CD14-positive monocyte (primary cell): ENCODE measurements at regions of chr1 and their contacts with region 1.

Region 1: DNA sequence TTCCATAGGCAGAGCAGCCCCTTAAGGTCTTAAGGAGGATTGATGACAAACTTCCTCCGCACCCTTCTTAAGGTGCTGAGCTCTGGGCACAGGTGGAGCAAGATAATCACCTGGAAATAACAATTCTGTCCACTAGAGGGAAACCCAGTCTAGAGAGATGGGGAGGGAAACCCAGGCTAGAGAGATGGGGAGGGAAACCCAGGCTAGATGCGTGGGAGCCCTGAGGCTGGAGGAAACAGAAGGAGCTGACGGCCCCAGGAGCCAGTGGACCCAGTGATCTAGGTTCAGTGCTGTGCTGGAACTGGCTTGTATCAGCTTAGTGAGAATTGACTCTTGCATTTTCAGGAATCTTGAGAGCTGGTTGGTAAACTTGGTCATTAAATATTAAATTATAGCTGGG is 17.8 kb upstream of the MYCL start:
- DNase-seq: peak; percentile 63 to 77 (median 74)
- H3K4me3 ChIP-seq: no peak overlapping the region
- H3K4me3 Mint-ChIP-seq: no peak overlapping the region
- H3K27ac ChIP-seq: no peak overlapping the region
- H3K27ac Mint-ChIP-seq: no peak overlapping the region
- H3K4me1 ChIP-seq: peaks cover 9 to 13% of the 10 kb centered on the region in 2 donors
- H3K4me1 Mint-ChIP-seq: peaks cover 12% of the 10 kb centered on the region
- H3K27me3 ChIP-seq: no peaks in the 10 kb centered on the region
- H3K27me3 Mint-ChIP-seq: peaks cover 2 to 9% (median 4%) of the 10 kb centered on the region in 3 donors
- CTCF ChIP-seq: peak; percentile 87

Region 2: DNA sequence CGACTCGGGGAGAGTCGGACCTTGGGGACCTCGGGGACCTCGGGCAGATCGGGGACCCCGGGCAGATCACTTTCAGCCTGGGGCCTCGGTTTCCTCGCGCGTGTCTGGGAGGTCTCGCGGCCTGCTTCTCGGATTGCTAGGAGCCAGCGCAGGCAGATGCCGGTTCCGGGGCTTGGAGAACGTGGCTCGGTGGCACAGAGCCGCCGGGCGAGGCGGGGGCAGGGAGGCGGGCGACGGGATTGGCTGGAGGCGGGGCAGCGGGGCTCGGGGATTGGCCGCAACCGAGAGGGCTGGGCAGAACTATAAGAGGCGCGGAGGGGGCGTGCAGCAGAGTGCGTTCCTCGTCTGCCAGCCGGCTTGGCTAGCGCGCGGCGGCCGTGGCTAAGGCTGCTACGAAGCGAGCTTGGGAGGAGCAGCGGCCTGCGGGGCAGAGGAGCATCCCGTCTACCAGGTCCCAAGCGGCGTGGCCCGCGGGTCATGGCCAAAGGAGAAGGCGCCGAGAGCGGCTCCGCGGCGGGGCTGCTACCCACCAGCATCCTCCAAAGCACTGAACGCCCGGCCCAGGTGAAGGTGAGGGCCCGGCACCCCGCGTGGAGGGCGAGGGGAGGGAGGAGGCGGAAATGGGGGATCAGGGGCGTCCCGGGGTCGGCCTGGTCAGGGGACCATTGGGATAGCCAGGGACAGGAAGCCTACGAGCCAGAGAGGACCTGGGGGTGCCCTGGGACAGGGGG is 35.4 kb after region 1 on chr1 and contains the start of gene MFSD2A:
- intact Hi-C with region 1: loop called in 1 of 2 experiments (anchors 5 kb)
- DNase-seq: peak; percentile 89 to 92 (median 91)
- H3K4me3 ChIP-seq: peak within 1 kb of the TSS; percentile 46 to 93 (median 70)
- H3K4me3 Mint-ChIP-seq: peak within 1 kb of the TSS; percentile 96 to 99
- H3K27ac ChIP-seq: peak within 1 kb of the TSS; percentile 57 to 84
- H3K27ac Mint-ChIP-seq: peak within 1 kb of the TSS; percentile 82 to 94 (median 88)
- H3K4me1 ChIP-seq: peaks cover 77 to 79% of the 10 kb centered on the region in 2 donors
- H3K4me1 Mint-ChIP-seq: peaks cover 75% of the 10 kb centered on the region
- H3K27me3 ChIP-seq: no peaks in the 10 kb centered on the region
- H3K27me3 Mint-ChIP-seq: peaks cover 0 to 3% (median 2%) of the 10 kb centered on the region in 3 donors
- CTCF ChIP-seq: no peak
- polyA plus RNA-seq, gene MFSD2A: 6.8 to 17.9 (median 7.9) TPM

Region 3: GRCh38 chr1:39973503-39974135 is 54.1 kb after region 1 on chr1:
- intact Hi-C with region 1: loop called (anchors 1 to 2 kb)
- DNase-seq: peak; percentile 66 to 78 (median 71)
- H3K4me3 ChIP-seq: no peak overlapping the region
- H3K4me3 Mint-ChIP-seq: peak overlapping the region in 1 of 2 donors; percentile 39
- H3K27ac ChIP-seq: no peak overlapping the region
- H3K27ac Mint-ChIP-seq: peak overlapping the region in 3 of 7 donors; percentile 8 to 27 (median 12)
- H3K4me1 ChIP-seq: peaks cover 20 to 26% of the 10 kb centered on the region in 2 donors
- H3K4me1 Mint-ChIP-seq: peaks cover 30% of the 10 kb centered on the region
- H3K27me3 ChIP-seq: no peaks in the 10 kb centered on the region
- H3K27me3 Mint-ChIP-seq: peaks cover 0 to 2% (median 0%) of the 10 kb centered on the region in 3 donors
- CTCF ChIP-seq: peak; percentile 95

Region 4: DNA sequence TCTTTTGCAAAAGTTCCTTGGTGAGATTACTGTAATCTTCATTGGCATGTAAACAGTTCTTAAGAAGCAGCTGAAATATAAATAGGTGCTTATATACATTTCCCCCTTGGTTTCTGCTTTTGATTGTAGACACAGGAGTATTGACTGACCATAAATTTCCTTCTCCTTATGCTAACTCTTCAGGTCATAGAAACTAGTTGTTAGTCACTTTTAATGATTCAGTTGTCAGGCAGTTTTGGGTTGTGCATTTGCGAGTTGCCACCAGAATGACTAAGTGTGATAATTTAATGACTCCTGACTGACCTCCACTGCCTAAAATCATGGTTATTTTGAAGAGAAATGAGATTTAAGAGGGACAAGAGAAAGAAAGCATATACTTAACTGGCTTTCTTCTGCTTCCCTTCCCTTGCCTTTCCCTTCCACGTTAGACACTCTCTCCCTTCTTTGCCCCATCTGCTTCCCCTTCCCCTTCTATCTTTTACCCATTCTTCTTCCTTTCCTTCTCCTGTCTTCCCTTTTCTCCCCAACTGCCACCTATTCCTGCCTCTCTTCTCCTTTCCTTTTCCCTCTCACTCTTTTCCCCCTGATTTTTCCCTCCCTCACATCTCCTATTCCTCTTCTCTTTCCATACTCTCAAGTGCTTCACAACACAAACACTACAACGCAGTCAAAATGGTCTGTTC is 350.7 kb after region 1 on chr1:
- intact Hi-C with region 1: no loop called
- DNase-seq: no peak
- H3K4me3 ChIP-seq: no peak overlapping the region
- H3K4me3 Mint-ChIP-seq: no peak overlapping the region
- H3K27ac ChIP-seq: no peak overlapping the region
- H3K27ac Mint-ChIP-seq: peak overlapping the region in 4 of 7 donors; percentile 3 to 85 (median 12)
- H3K4me1 ChIP-seq: no peaks in the 10 kb centered on the region
- H3K4me1 Mint-ChIP-seq: no peaks in the 10 kb centered on the region
- H3K27me3 ChIP-seq: no peaks in the 10 kb centered on the region
- H3K27me3 Mint-ChIP-seq: no peaks in the 10 kb centered on the region
- CTCF ChIP-seq: no peak